ENCODE measurements at regions of chr11 and their contacts with region 1.

Region 1: DNA sequence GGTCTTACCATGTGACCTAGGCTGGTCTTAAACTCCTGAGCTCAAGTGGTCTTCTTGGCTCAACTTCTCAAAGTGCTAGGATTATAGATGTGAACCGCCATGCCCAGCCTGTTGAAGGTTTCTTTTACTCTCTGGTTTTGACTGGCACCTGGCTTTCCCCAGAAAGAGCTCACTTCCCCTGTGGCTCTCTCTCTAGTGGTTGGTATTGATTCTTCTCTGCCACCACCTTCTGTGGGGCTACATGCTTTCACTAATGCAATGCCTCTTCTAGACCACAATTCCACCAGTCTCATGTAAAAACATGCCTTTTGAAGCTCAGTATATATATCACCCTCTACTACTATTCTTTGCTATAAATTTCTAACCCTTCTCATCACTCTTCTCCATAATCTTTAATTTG is 67.2 kb downstream of the CCDC83 start:
- DNase-seq: no peak
- H3K4me3 ChIP-seq: no peak overlapping the region
- H3K27ac ChIP-seq: no peak overlapping the region
- H3K4me1 ChIP-seq: no peaks in the 10 kb centered on the region
- H3K27me3 ChIP-seq: no peaks in the 10 kb centered on the region
- CTCF ChIP-seq: no peak
- EP300 ChIP-seq: no peak
- POLR2A ChIP-seq: no peak

Region 2: GRCh38 chr11:85867751-85868150 is 54.6 kb before region 1 on chr11:
- intact Hi-C with region 1: loop called in 1 of 4 experiments (anchors 10 kb)
- DNase-seq: no peak
- H3K4me3 ChIP-seq: no peak overlapping the region
- H3K27ac ChIP-seq: no peak overlapping the region
- H3K4me1 ChIP-seq: no peaks in the 10 kb centered on the region
- H3K27me3 ChIP-seq: no peaks in the 10 kb centered on the region
- CTCF ChIP-seq: no peak
- EP300 ChIP-seq: no peak
- POLR2A ChIP-seq: no peak